GM13976 (cell line): ENCODE measurements at regions of chr20 and their contacts with region 1.

Region 1: GRCh38 chr20:4613718-4614620 is 107.7 kb upstream of the PRND start:
- DNase-seq: peak; percentile 57
- CTCF ChIP-seq: peak; percentile 28

Region 2: DNA sequence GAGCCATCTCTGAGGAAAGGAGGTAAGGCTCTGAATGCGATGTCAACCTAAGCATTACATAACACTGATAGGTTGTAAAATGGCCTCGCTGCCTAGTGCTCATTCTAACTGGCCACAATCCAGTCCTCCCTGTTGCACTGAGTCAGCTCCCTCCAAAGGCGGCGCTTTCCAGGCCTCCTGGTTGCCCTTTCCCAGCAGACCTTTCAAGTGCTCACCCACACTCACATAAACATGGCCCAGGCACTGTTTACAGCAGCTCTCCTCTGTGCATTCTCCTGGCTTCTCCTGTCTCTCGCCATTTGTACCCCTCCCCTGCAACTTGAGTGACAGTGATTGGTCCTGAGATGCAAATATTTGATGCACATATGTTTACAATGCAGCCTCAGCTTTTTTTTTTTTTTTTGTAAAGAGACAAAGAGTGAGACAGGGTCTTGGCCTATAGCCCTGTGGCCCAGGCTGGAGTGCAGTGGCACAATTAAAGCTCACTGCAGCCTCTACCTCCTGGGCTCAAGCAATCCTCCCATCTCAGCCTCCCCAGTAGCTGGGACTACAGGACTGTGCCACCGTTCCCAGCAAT is 71.0 kb after region 1 on chr20:
- in situ Hi-C with region 1: no loop called
- DNase-seq: no peak
- CTCF ChIP-seq: no peak

Region 3: DNA sequence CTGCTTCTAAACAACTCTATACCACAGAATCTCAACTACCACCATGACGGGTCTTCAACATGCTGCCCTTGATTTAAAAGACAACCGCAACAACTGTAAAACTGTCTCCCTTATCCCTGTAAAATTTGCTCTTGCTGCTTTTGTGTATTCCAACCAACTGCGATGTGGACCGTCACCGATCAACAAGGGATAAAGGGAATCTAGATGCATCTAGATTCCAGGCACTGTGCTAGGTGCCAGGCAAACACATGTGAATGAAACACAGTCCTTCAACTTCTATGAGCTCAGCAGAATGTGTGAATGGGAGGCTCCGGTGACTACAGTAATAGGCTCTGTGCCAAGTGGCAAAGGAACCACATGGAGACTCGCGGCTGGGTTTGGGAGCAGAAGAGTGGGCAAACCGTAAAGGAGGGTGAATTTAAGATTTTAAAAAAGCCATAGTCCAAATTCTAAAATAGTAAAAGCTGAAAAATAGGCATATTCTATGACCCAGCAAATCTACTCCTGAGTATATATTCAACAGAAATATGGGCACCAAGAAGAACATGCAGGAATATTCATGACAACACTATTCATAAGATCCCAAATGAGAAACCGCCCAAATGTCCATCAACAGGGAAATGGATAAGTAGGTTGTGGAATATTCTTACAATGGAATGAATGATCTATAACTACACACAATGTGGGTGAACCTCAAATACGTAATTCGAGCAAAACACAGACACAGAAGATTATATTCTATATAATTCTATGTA is 104.0 kb after region 1 on chr20:
- in situ Hi-C with region 1: loop called (anchors 5 kb)
- DNase-seq: no peak
- CTCF ChIP-seq: no peak

Region 4: DNA sequence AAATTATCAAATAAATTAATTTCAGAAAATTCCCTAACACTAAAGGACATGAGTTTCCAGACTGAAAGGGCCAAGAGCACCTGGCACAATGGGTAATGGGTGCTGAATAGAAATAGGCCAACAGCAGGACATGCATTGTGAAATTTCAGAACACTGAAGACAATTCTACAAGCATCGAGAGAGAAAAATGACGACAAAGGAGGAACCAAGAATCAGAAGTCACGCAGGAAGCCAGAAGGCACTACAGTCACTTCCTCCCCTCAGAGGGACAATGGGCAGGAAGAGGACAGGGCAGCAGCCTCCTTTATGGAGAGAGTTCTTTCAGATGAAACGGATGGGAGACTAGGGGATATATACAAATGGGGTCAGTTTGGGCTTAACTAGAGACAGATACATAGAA is 476.2 kb after region 1 on chr20:
- in situ Hi-C with region 1: no loop called
- DNase-seq: peak; percentile 55
- CTCF ChIP-seq: no peak

Region 5: GRCh38 chr20:5156675-5157448 is 542.9 kb after region 1 on chr20:
- in situ Hi-C with region 1: no loop called
- DNase-seq: no peak
- CTCF ChIP-seq: no peak

Region 6: GRCh38 chr20:5557123-5557522 is 943.2 kb after region 1 on chr20:
- in situ Hi-C with region 1: no loop called
- DNase-seq: peak; percentile 58
- CTCF ChIP-seq: peak; percentile 63